ENCODE measurements at regions of chr6 and their contacts with region 1.

Region 1: GRCh38 chr6:31399589-31400466 is 3.6 kb upstream of the MICA start:
- DNase-seq: peak; percentile 93
- H3K4me3 Mint-ChIP-seq: peak overlapping the region; percentile 73
- H3K27ac Mint-ChIP-seq: peak overlapping the region; percentile 83
- H3K4me1 Mint-ChIP-seq: peaks cover 24% of the 10 kb centered on the region
- H3K27me3 Mint-ChIP-seq: no peaks in the 10 kb centered on the region
- CTCF ChIP-seq: peak; percentile 93

Region 2: DNA sequence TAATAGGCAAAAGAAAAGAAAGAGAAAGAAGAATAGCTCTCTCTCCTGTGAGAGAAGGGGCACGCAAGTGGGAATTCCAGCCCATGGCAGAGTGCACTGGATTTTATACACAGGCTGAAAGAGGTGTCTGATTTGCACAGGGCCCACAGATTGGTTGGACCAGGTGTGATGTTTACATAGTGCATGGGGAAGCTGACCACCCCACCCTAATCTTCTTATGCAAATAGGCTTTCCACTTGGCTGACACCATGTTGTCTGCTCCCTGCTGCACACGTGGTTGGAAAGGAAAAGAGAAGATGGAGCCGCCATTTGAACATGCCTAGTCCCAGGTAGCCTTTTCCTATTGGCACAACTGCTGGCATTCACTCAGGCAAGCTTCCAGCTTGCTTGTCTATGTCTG is 23.7 kb after region 1 on chr6:
- CTCF ChIA-PET with region 1: interaction called, 3 read pairs
- POLR2A ChIA-PET with region 1: interaction called, 16 read pairs
- intact Hi-C with region 1: no loop called
- DNase-seq: no peak
- H3K4me3 Mint-ChIP-seq: no peak overlapping the region
- H3K27ac Mint-ChIP-seq: no peak overlapping the region
- H3K4me1 Mint-ChIP-seq: peaks cover 12% of the 10 kb centered on the region
- H3K27me3 Mint-ChIP-seq: peaks cover 20% of the 10 kb centered on the region
- CTCF ChIP-seq: no peak

Measured in MCF 10A (cell line).